MCF 10A (cell line): ENCODE measurements at regions of chr9 and their contacts with region 1.

Region 1: GRCh38 chr9:98192503-98193335 is at the start of gene CORO2A:
- DNase-seq: peak; percentile 80
- H3K4me3 Mint-ChIP-seq: peak within 1 kb of the TSS; percentile 77
- H3K27ac Mint-ChIP-seq: no peak within 1 kb of the TSS
- H3K4me1 Mint-ChIP-seq: peaks cover 6% of the 10 kb centered on the region
- H3K27me3 Mint-ChIP-seq: no peaks in the 10 kb centered on the region
- CTCF ChIP-seq: peak; percentile 17
- total RNA-seq, gene CORO2A: 3.4 and 3.9 TPM in 2 replicates

Region 2: GRCh38 chr9:98118640-98119601 is 73.8 kb before region 1 on chr9 and contains the start of gene TRIM14:
- CTCF ChIA-PET with region 1: interaction called, 15 read pairs
- POLR2A ChIA-PET with region 1: interaction called, 10 read pairs
- intact Hi-C with region 1: loop called (anchors 1 kb)
- DNase-seq: peak; percentile 70
- H3K4me3 Mint-ChIP-seq: peak within 1 kb of the TSS; percentile 74
- H3K27ac Mint-ChIP-seq: peak within 1 kb of the TSS; percentile 34
- H3K4me1 Mint-ChIP-seq: peaks cover 22% of the 10 kb centered on the region
- H3K27me3 Mint-ChIP-seq: no peaks in the 10 kb centered on the region
- CTCF ChIP-seq: no peak
- total RNA-seq, gene TRIM14: 15.8 and 17.9 TPM in 2 replicates

Region 3: GRCh38 chr9:98146101-98146991 is 46.4 kb before region 1 on chr9:
- CTCF ChIA-PET with region 1: interaction called, 4 read pairs
- POLR2A ChIA-PET with region 1: interaction called, 6 read pairs
- intact Hi-C with region 1: loop called (anchors 10 kb)
- DNase-seq: peak; percentile 92
- H3K4me3 Mint-ChIP-seq: peak overlapping the region; percentile 8
- H3K27ac Mint-ChIP-seq: peak overlapping the region; percentile 98
- H3K4me1 Mint-ChIP-seq: peaks cover 38% of the 10 kb centered on the region
- H3K27me3 Mint-ChIP-seq: no peaks in the 10 kb centered on the region
- CTCF ChIP-seq: no peak

Region 4: DNA sequence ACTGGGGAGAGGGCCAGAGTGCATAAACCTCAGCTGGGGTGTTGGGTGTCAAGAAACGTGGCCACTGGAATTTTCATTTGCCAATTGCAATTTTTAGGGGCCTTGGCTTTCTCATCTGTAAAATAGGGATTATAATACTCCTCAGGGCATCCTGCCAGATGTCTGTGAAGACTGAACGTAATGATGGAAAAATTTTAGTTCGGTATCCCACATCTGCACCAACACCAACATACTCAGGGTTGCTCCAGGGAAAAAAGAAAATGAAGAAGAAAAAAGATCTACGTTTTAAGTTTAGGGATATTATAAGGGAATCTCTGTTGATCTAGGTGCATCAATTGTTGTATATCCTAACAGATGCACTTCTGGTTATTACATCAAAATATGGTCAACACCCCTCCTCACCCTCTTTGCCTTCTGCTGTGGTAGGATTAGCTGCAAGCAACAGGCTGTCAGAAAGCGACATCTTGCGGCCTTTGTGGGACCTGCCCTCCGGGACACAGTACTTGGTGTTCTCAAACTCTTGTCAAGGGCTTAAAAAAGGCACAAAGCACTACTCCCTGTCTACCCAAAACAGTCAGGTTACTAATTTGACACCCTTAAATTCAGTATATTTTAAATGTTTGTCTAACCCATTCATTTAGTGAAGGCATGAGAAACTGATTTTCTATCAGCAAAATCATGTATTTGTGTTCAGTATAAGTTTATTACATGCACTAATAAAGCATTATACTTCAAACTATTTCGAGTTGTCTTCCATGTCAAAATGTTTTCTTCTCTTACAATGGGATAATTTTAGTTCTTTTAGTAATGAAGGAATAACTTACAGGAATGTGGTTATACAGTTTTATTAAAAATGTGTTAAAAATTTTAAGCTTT is 71.0 kb after region 1 on chr9:
- CTCF ChIA-PET with region 1: interaction called, 10 read pairs
- POLR2A ChIA-PET with region 1: interaction called, 4 read pairs
- intact Hi-C with region 1: loop called (anchors 2 kb)
- DNase-seq: peak; percentile 83
- H3K4me3 Mint-ChIP-seq: no peak overlapping the region
- H3K27ac Mint-ChIP-seq: no peak overlapping the region
- H3K4me1 Mint-ChIP-seq: peaks cover 14% of the 10 kb centered on the region
- H3K27me3 Mint-ChIP-seq: no peaks in the 10 kb centered on the region
- CTCF ChIP-seq: peak; percentile 96

Region 5: GRCh38 chr9:98295824-98296223 is 103.1 kb after region 1 on chr9:
- CTCF ChIA-PET with region 1: no interaction called
- POLR2A ChIA-PET with region 1: no interaction called
- intact Hi-C with region 1: no loop called
- DNase-seq: no peak
- H3K4me3 Mint-ChIP-seq: no peak overlapping the region
- H3K27ac Mint-ChIP-seq: no peak overlapping the region
- H3K4me1 Mint-ChIP-seq: no peaks in the 10 kb centered on the region
- H3K27me3 Mint-ChIP-seq: peaks cover 11% of the 10 kb centered on the region
- CTCF ChIP-seq: no peak